Endothelial cell of umbilical vein (primary cell): ENCODE measurements at regions of chr3 and their contacts with region 1.

Region 1: DNA sequence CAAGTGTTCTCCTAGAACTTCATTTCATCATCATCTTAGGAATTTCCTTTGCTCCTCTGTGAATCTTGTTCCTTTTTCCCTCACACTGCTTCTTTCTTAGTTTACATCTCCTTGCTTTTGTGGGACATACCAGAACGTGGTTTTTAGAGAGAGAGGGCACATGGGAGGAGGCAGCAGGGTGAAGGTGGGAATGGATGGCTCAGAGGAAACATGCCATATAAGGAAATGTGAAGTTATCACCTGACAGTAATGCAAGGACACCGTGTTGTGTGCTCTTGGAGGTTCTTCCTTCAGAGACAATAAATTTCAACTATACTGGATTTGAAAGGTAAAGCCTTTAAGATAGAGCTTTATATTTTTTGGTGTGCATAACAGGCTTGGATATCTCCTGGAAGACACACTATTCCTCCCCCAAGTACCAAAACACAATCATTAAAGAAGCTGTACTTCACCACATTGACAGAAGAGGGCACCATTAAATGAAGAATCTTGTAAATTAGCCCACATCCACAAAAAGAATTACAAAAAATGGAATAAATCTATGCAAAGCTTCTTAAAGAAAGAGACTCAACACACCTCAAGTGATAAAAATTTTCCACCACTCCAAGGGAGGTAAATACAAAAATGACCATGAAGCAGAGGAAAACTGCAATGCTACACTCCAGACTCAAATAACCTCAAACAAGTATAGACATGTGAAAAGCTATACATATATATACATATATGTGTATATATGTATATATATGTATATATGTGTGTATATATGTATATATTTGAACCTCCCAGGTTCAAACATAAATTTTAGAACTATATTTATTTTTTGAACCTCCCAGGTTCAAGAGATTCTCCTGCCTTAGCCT is 26.1 kb downstream of the RPL39L start:
- DNase-seq: peak; percentile 64
- H3K4me3 ChIP-seq: no peak overlapping the region
- H3K27ac ChIP-seq: no peak overlapping the region
- H3K4me1 ChIP-seq: no peaks in the 10 kb centered on the region
- H3K27me3 ChIP-seq: no peaks in the 10 kb centered on the region
- CTCF ChIP-seq: peak; percentile 30 to 39
- POLR2A ChIP-seq: no peak

Region 2: DNA sequence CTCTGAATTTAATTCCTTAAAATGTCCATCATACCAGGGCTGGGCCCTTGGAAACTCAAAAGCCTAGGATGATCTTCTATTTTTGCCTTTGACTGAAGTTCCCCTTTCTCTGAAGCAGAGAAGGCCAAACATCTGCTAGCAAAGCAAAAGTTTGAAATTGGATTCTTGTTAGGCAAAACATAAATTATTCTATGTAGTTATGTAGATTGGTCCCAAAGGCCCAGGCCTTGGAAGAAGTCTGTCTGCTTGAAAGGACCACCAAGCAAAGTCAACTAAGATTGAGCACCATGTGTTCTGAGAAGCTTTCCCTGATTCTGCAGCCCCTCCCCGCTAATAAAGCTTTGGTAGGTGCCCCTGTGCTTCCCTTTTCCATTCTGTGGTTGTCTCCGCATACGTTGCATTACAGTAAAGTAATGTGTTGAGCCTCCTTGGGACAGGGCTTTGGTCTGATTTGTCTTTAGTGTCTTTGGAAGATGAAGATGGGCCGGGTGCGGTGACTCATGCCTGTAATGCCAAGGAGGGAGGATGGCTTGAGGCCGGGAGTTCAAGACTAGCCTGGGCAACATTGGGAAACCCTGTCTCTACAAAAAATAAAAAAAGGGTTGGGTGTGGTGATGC is 30.3 kb before region 1 on chr3:
- CTCF ChIA-PET with region 1: interaction called, 17 read pairs
- POLR2A ChIA-PET with region 1: interaction called, 4 read pairs
- dilution Hi-C with region 1: no loop called
- intact Hi-C with region 1: no loop called
- DNase-seq: no peak
- H3K4me3 ChIP-seq: no peak overlapping the region
- H3K27ac ChIP-seq: no peak overlapping the region
- H3K4me1 ChIP-seq: peaks cover 14% of the 10 kb centered on the region
- H3K27me3 ChIP-seq: no peaks in the 10 kb centered on the region
- CTCF ChIP-seq: no peak
- POLR2A ChIP-seq: no peak

Region 3: GRCh38 chr3:187101184-187102072 is 11.7 kb before region 1 on chr3:
- CTCF ChIA-PET with region 1: interaction called, 65 read pairs
- POLR2A ChIA-PET with region 1: no interaction called
- dilution Hi-C with region 1: no loop called
- intact Hi-C with region 1: no loop called
- DNase-seq: peak; percentile 90
- H3K4me3 ChIP-seq: peak overlapping the region; percentile 36 to 81 (median 71)
- H3K27ac ChIP-seq: peak overlapping the region; percentile 62
- H3K4me1 ChIP-seq: peaks cover 13% of the 10 kb centered on the region
- H3K27me3 ChIP-seq: no peaks in the 10 kb centered on the region
- CTCF ChIP-seq: no peak
- POLR2A ChIP-seq: no peak

Region 4: DNA sequence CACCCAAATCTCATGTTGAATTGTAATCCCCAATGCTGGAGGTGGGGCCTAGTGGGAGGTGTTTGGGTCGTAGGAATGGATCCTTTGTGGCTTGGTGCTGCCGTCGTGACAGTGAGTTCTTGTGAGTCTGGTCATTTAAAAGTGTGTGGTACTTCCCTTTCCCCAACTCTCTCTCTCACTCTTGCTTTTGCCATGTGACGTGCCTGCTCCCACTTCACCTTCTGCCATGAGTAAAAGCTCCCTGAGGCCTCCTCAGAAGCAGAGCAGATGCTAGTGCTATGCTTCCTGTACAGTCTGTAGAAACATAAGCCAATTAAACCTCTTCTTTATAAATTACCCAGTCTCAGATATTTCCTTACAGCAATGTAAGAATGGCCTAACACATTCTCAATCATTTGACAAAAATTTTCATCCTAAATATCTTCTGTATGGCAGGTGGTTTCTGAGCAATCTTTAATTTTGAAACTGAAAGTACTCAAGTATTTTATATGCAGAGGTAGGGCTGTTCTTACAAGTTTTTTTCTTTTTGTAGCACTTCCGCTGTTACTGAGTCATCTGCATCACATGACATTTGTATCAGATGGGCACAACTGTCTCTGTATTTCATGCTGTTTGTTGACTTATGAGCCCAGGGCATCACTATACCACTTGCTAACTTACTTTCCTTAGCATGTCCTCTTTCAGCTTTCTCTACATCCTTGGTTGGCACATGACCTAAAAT is 17.3 kb after region 1 on chr3:
- CTCF ChIA-PET with region 1: interaction called, 86 read pairs
- POLR2A ChIA-PET with region 1: no interaction called
- dilution Hi-C with region 1: no loop called
- intact Hi-C with region 1: no loop called
- DNase-seq: peak; percentile 83
- H3K4me3 ChIP-seq: peak overlapping the region in 1 of 3 experiments; percentile 41
- H3K27ac ChIP-seq: peak overlapping the region; percentile 40
- H3K4me1 ChIP-seq: peaks cover 11% of the 10 kb centered on the region
- H3K27me3 ChIP-seq: no peaks in the 10 kb centered on the region
- CTCF ChIP-seq: no peak
- POLR2A ChIP-seq: no peak

Region 5: GRCh38 chr3:187150599-187150998 is 37.4 kb after region 1 on chr3:
- CTCF ChIA-PET with region 1: interaction called, 75 read pairs
- POLR2A ChIA-PET with region 1: no interaction called
- dilution Hi-C with region 1: no loop called
- intact Hi-C with region 1: loop called (anchors 1 kb)
- DNase-seq: peak; percentile 16
- H3K4me3 ChIP-seq: no peak overlapping the region
- H3K27ac ChIP-seq: no peak overlapping the region
- H3K4me1 ChIP-seq: no peaks in the 10 kb centered on the region
- H3K27me3 ChIP-seq: peaks cover 2 to 7% of the 10 kb centered on the region in 2 experiments
- CTCF ChIP-seq: peak; percentile 10 to 22
- POLR2A ChIP-seq: no peak

Region 6: GRCh38 chr3:187164885-187165543 is 51.9 kb after region 1 on chr3:
- CTCF ChIA-PET with region 1: interaction called, 364 read pairs
- POLR2A ChIA-PET with region 1: no interaction called
- dilution Hi-C with region 1: no loop called
- intact Hi-C with region 1: loop called (anchors 1 kb)
- DNase-seq: peak; percentile 62
- H3K4me3 ChIP-seq: no peak overlapping the region
- H3K27ac ChIP-seq: no peak overlapping the region
- H3K4me1 ChIP-seq: no peaks in the 10 kb centered on the region
- H3K27me3 ChIP-seq: peaks cover 17 to 28% of the 10 kb centered on the region in 2 experiments
- CTCF ChIP-seq: peak; percentile 54 to 61
- POLR2A ChIP-seq: no peak

Region 7: GRCh38 chr3:187714404-187714979 is 601.3 kb after region 1 on chr3:
- CTCF ChIA-PET with region 1: interaction called, 16 read pairs
- POLR2A ChIA-PET with region 1: no interaction called
- dilution Hi-C with region 1: no loop called
- intact Hi-C with region 1: loop called (anchors 2 kb)
- DNase-seq: peak; percentile 71
- H3K4me3 ChIP-seq: no peak overlapping the region
- H3K27ac ChIP-seq: no peak overlapping the region
- H3K4me1 ChIP-seq: no peaks in the 10 kb centered on the region
- H3K27me3 ChIP-seq: no peaks in the 10 kb centered on the region
- CTCF ChIP-seq: peak; percentile 87 to 89
- POLR2A ChIP-seq: no peak